ENCODE measurements at regions of chr6 and their contacts with region 1.

Region 1: GRCh38 chr6:2103644-2104523 is 141.5 kb downstream of the GMDS start:
- DNase-seq: peak; percentile 54
- H3K4me3 ChIP-seq: peak overlapping the region; percentile 12 to 38 (median 32)
- H3K27ac ChIP-seq: peak overlapping the region; percentile 32
- H3K4me1 ChIP-seq: peaks cover 7% of the 10 kb centered on the region
- H3K27me3 ChIP-seq: no peaks in the 10 kb centered on the region
- CTCF ChIP-seq: peak; percentile 47 to 68

Region 2: DNA sequence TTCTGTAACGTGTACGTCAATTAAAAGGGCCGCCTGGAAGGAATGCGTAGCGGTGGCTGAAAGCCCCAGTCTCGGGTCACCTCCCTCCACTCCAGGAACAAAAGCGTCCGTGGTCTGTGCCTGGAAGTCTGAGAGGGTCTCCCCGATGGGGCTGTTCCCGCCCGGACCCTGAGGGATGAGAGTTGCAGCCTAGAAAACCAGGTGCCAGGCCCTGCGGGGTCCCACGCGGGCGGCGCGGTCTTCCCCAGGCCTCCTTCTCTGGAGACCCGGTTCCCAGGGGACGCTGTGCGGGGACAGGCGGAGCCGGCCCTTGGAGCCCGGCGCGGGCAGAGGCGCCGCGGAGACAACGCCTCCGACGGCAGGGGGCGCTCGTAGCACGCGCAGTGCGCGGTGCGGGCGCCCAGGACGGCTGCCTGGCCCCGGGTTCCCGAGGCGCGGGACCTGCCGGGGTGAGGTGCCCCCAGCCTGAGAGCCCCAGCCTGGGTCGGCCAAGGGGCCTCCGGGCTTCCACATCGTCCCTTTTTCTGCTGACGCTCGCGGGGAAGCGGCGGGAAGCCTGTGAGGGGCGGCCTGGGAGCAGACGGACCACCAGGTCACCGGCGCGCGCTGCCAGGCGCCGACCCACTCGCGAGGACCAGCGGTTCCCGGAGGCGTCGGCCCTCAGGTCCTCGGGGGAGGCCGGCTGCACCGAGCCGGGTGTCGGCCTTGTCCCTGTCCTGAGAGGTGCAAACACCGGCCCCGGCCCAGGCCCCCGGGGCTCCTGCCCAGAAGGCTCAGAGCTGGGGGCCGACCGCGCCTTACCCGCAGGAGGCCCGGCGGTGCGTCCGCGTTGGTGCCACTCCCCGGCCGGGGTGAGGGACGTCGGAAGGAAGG is 499.5 kb before region 1 on chr6:
- CTCF ChIA-PET with region 1: no interaction called
- dilution Hi-C with region 1: loop called (anchors 5 kb)
- in situ Hi-C with region 1: loop called (anchors 10 to 25 kb)
- intact Hi-C with region 1: loop called (anchors 1 kb)
- DNase-seq: peak; percentile 48
- H3K4me3 ChIP-seq: peak overlapping the region; percentile 39 to 57 (median 54)
- H3K27ac ChIP-seq: no peak overlapping the region
- H3K4me1 ChIP-seq: peaks cover 16% of the 10 kb centered on the region
- H3K27me3 ChIP-seq: no peaks in the 10 kb centered on the region
- CTCF ChIP-seq: peak; percentile 62 to 80

Region 3: GRCh38 chr6:1686117-1687098 is 417.5 kb before region 1 on chr6:
- CTCF ChIA-PET with region 1: no interaction called
- dilution Hi-C with region 1: no loop called
- in situ Hi-C with region 1: no loop called
- intact Hi-C with region 1: loop called (anchors 2 kb)
- DNase-seq: peak; percentile 96
- H3K4me3 ChIP-seq: no peak overlapping the region
- H3K27ac ChIP-seq: peak overlapping the region; percentile 87
- H3K4me1 ChIP-seq: peaks cover 36% of the 10 kb centered on the region
- H3K27me3 ChIP-seq: no peaks in the 10 kb centered on the region
- CTCF ChIP-seq: peak; percentile 32 to 45

Region 4: GRCh38 chr6:1893470-1894130 is 210.3 kb before region 1 on chr6:
- CTCF ChIA-PET with region 1: no interaction called
- dilution Hi-C with region 1: no loop called
- in situ Hi-C with region 1: no loop called
- intact Hi-C with region 1: loop called (anchors 10 kb)
- DNase-seq: no peak
- H3K4me3 ChIP-seq: no peak overlapping the region
- H3K27ac ChIP-seq: no peak overlapping the region
- H3K4me1 ChIP-seq: peaks cover 23% of the 10 kb centered on the region
- H3K27me3 ChIP-seq: no peaks in the 10 kb centered on the region
- CTCF ChIP-seq: no peak

Region 5: DNA sequence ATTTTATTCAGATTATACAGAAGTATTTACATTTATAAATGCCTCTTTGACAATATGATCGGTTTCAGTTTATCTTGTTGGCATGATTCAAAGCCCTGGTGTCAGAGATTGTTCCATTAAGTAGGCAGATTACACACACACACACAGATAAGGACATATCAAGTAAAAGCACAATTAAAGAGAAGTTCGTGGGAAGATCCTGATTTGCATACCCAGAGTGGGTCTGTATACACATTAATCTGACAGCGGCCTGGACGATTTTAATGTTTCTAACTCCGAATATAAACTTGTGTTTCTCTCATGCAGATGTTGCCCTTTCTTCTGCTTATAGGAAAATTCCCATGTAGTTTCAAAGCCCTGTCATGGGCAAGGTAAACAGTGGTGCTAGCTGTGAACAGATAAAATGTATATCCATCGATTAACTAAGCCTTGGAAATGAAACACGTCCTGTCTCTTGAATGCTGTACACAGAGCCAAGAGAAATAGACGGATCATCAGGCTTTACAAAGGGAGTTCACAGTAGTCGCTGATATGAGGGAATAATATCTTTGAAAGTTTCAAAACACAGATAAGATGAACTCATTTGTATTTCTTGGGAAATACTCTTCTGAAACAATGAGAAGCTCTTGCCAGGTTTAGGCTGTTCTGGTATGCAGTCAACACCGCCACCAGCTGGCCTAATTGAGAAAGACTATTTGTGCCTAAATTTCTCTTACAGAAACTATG is 249.7 kb after region 1 on chr6:
- CTCF ChIA-PET with region 1: no interaction called
- dilution Hi-C with region 1: no loop called
- in situ Hi-C with region 1: no loop called
- intact Hi-C with region 1: loop called (anchors 2 kb)
- DNase-seq: peak; percentile 61
- H3K4me3 ChIP-seq: no peak overlapping the region
- H3K27ac ChIP-seq: no peak overlapping the region
- H3K4me1 ChIP-seq: no peaks in the 10 kb centered on the region
- H3K27me3 ChIP-seq: no peaks in the 10 kb centered on the region
- CTCF ChIP-seq: peak; percentile 78 to 80

Region 6: DNA sequence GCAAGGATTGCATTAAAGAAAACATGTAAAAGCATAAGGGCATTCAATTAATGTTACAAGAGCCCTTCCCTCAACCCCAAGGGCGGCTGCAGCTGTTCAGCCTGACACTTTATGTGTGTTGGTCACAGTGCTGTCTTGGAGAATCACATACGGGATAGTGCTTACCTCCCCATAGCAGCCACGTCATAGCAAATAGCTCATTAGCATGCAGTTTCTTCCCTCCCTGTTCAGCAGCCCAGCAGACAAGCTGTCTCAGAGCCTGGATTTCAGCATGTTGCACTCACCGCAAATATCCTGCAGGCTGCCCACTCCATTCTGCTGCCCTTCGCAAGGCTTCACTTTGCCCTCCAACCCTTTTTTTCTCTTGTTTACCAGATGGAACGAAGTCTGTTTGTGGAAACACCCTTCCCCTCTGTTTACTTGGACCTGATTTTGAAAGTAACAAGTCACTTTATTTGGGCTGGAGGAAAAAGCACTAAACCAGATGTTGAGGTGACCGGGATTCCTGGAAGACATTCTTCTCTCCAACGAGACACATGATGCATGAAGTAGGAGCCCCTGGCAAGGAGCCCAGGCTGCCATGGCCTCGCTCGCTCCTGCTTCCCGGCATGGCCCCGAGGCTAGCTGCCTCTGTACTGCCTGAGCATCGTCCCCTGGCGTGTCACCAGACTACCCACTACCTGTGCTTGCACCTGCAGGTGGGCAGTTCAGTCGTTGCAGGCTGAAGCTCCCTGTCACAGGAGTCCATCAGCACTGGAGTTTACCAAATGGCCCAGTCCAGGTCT is 293.2 kb after region 1 on chr6:
- CTCF ChIA-PET with region 1: no interaction called
- dilution Hi-C with region 1: no loop called
- in situ Hi-C with region 1: no loop called
- intact Hi-C with region 1: no loop called
- DNase-seq: no peak
- H3K4me3 ChIP-seq: no peak overlapping the region
- H3K27ac ChIP-seq: no peak overlapping the region
- H3K4me1 ChIP-seq: peaks cover 5% of the 10 kb centered on the region
- H3K27me3 ChIP-seq: no peaks in the 10 kb centered on the region
- CTCF ChIP-seq: no peak

Region 7: GRCh38 chr6:2695454-2696095 is 591.7 kb after region 1 on chr6:
- CTCF ChIA-PET with region 1: no interaction called
- dilution Hi-C with region 1: no loop called
- in situ Hi-C with region 1: no loop called
- intact Hi-C with region 1: loop called (anchors 10 kb)
- DNase-seq: peak; percentile 38
- H3K4me3 ChIP-seq: no peak overlapping the region
- H3K27ac ChIP-seq: no peak overlapping the region
- H3K4me1 ChIP-seq: no peaks in the 10 kb centered on the region
- H3K27me3 ChIP-seq: no peaks in the 10 kb centered on the region
- CTCF ChIP-seq: peak; percentile 17 to 50

Measured in mammary epithelial cell (primary cell).